Endothelial cell of umbilical vein (primary cell): ENCODE measurements at regions of chr2 and their contacts with region 1.

Region 1: DNA sequence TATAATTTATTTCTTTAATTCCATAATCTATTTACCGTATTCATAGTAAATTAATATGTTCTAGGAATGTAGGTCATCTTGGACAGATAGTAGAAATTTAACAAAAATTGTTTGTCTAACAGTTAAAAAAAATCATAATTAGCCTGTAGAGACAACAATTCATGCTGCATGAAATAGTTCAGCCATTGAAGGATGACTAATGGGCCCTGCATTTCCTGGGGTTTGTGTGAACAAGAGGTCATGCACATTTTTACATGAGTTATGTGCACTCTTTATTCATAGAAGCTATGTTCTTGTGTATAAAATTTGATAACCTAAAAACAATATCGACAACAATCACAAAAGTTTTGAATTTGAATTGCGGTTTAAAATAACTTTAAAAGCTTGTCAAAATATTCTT is 1663.6 kb downstream of the SUCLG1 start:
- DNase-seq: peak; percentile 87
- H3K4me3 ChIP-seq: peak overlapping the region in 1 of 3 experiments; percentile 55
- H3K27ac ChIP-seq: peak overlapping the region; percentile 93
- H3K4me1 ChIP-seq: peaks cover 21% of the 10 kb centered on the region
- H3K27me3 ChIP-seq: no peaks in the 10 kb centered on the region
- CTCF ChIP-seq: no peak
- POLR2A ChIP-seq: peak; percentile 22

Region 2: GRCh38 chr2:82675186-82675585 is 120.3 kb before region 1 on chr2:
- CTCF ChIA-PET with region 1: no interaction called
- POLR2A ChIA-PET with region 1: no interaction called
- dilution Hi-C with region 1: no loop called
- intact Hi-C with region 1: loop called (anchors 1 kb)
- DNase-seq: peak; percentile 72
- H3K4me3 ChIP-seq: no peak overlapping the region
- H3K27ac ChIP-seq: peak overlapping the region; percentile 59
- H3K4me1 ChIP-seq: peaks cover 8% of the 10 kb centered on the region
- H3K27me3 ChIP-seq: no peaks in the 10 kb centered on the region
- CTCF ChIP-seq: no peak
- POLR2A ChIP-seq: no peak

Region 3: GRCh38 chr2:82690757-82691411 is 104.6 kb before region 1 on chr2:
- CTCF ChIA-PET with region 1: interaction called, 6 read pairs
- POLR2A ChIA-PET with region 1: no interaction called
- dilution Hi-C with region 1: no loop called
- intact Hi-C with region 1: loop called (anchors 1 kb)
- DNase-seq: peak; percentile 93
- H3K4me3 ChIP-seq: no peak overlapping the region
- H3K27ac ChIP-seq: peak overlapping the region; percentile 68
- H3K4me1 ChIP-seq: peaks cover 34% of the 10 kb centered on the region
- H3K27me3 ChIP-seq: no peaks in the 10 kb centered on the region
- CTCF ChIP-seq: no peak
- POLR2A ChIP-seq: peak; percentile 41

Region 4: GRCh38 chr2:83055338-83056010 is 260.0 kb after region 1 on chr2:
- CTCF ChIA-PET with region 1: no interaction called
- POLR2A ChIA-PET with region 1: no interaction called
- dilution Hi-C with region 1: no loop called
- intact Hi-C with region 1: loop called (anchors 1 kb)
- DNase-seq: peak; percentile 93
- H3K4me3 ChIP-seq: peak overlapping the region in 1 of 3 experiments; percentile 15
- H3K27ac ChIP-seq: peak overlapping the region; percentile 97
- H3K4me1 ChIP-seq: peaks cover 36% of the 10 kb centered on the region
- H3K27me3 ChIP-seq: no peaks in the 10 kb centered on the region
- CTCF ChIP-seq: no peak
- POLR2A ChIP-seq: no peak

Region 5: DNA sequence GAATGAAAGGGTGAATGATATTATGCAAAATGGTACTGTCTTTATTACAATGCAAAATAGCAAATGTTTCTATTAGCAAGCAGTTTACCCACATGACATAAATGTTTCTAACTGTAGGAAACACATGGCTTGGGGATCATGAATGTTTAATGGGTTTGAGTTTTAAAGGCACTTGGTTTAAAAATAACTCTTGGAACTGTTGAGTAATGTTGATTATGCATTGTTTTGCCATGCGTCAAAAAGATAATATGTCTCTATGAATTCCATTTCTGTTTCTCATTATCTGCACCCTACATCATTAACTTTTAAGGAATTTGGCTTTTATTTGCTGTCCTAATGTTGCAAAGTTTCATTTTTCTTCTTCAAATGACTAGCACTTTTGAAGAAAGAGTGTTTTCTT is 308.2 kb after region 1 on chr2:
- CTCF ChIA-PET with region 1: no interaction called
- POLR2A ChIA-PET with region 1: no interaction called
- dilution Hi-C with region 1: no loop called
- intact Hi-C with region 1: loop called (anchors 1 kb)
- DNase-seq: peak; percentile 91
- H3K4me3 ChIP-seq: no peak overlapping the region
- H3K27ac ChIP-seq: peak overlapping the region; percentile 86
- H3K4me1 ChIP-seq: peaks cover 24% of the 10 kb centered on the region
- H3K27me3 ChIP-seq: no peaks in the 10 kb centered on the region
- CTCF ChIP-seq: no peak
- POLR2A ChIP-seq: no peak